Left ventricle myocardium inferior (tissue), 1 donor: ENCODE measurements at regions of chr3 and their contacts with region 1.

Region 1: DNA sequence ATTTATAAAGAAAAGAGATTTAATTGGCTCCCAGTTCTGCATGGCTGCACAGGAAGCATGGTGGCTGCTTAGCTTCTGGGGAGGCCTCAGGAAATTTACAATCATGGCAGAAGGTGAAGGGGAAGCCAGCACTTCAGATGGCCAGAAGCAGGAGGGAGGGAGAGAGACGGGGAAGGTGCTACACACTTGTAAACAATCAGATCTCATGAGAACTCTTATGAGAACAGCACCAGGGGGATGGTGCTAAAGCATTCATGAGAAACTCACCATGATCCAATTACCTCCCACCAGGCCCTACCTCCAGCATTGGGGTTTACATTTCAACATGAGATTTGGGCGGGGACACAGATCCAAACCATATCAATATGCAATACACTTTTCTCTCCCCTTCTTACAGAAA is 73.7 kb downstream of the ECT2 start:
- DNase-seq: no peak
- H3K4me3 ChIP-seq: no peak overlapping the region
- H3K27ac ChIP-seq: no peak overlapping the region
- H3K4me1 ChIP-seq: no peaks in the 10 kb centered on the region
- H3K27me3 ChIP-seq: no peaks in the 10 kb centered on the region
- CTCF ChIP-seq: no peak

Region 2: GRCh38 chr3:173025941-173026340 is 201.7 kb after region 1 on chr3:
- intact Hi-C with region 1: loop called (anchors 10 kb)
- DNase-seq: no peak
- H3K4me3 ChIP-seq: no peak overlapping the region
- H3K27ac ChIP-seq: no peak overlapping the region
- H3K4me1 ChIP-seq: no peaks in the 10 kb centered on the region
- H3K27me3 ChIP-seq: no peaks in the 10 kb centered on the region
- CTCF ChIP-seq: no peak

Region 3: DNA sequence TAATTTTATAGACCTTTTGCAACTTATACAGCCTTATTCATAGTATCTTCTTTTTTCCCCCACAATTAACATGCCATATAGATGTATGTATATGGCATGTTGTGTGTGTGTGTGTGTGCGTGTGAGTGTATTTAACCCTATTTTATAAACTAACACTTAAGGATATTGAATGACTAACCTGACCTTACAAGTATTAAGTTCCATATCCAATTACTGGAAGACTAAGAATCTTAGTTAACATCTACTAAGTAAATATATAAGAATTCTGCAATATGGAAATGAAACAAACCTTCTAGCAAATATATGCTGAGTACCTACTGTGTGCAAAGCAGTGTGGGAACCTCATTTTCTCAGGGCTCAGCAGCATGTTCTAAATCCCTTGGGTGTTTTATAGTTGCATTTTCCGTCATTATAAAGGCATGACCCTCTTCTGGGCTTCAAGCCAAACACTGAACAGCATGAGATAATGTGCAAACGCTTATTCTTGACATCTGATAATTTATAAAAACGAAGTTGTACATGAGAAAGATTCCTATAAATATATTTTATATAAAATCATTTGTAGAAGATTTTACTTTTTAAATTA is 678.8 kb after region 1 on chr3:
- intact Hi-C with region 1: no loop called
- DNase-seq: no peak
- H3K4me3 ChIP-seq: no peak overlapping the region
- H3K27ac ChIP-seq: peak overlapping the region; percentile 30
- H3K4me1 ChIP-seq: peaks cover 20% of the 10 kb centered on the region
- H3K27me3 ChIP-seq: no peaks in the 10 kb centered on the region
- CTCF ChIP-seq: no peak